ENCODE measurements at regions of chr11 and their contacts with region 1.

Region 1: GRCh38 chr11:64134963-64135362 is 30.9 kb downstream of the MACROD1 start:
- DNase-seq: no peak
- H3K4me3 ChIP-seq: no peak overlapping the region
- H3K27ac ChIP-seq: no peak overlapping the region
- H3K4me1 ChIP-seq: peaks cover 0 to 37% (median 22%) of the 10 kb centered on the region in 4 donors
- H3K27me3 ChIP-seq: no peaks in the 10 kb centered on the region
- CTCF ChIP-seq: no peak
- EP300 ChIP-seq: no peak
- POLR2A ChIP-seq: no peak

Region 2: GRCh38 chr11:64094463-64095260 is 40.3 kb before region 1 on chr11:
- intact Hi-C with region 1: loop called (anchors 5 kb)
- DNase-seq: peak; percentile 83
- H3K4me3 ChIP-seq: no peak overlapping the region
- H3K27ac ChIP-seq: peak overlapping the region; percentile 53 to 86 (median 80)
- H3K4me1 ChIP-seq: peaks cover 0 to 74% (median 54%) of the 10 kb centered on the region in 4 donors
- H3K27me3 ChIP-seq: no peaks in the 10 kb centered on the region
- CTCF ChIP-seq: no peak
- EP300 ChIP-seq: no peak
- POLR2A ChIP-seq: no peak